Right cardiac atrium (tissue), 5 donors: ENCODE measurements at regions of chr11 and their contacts with region 1.

Region 1: DNA sequence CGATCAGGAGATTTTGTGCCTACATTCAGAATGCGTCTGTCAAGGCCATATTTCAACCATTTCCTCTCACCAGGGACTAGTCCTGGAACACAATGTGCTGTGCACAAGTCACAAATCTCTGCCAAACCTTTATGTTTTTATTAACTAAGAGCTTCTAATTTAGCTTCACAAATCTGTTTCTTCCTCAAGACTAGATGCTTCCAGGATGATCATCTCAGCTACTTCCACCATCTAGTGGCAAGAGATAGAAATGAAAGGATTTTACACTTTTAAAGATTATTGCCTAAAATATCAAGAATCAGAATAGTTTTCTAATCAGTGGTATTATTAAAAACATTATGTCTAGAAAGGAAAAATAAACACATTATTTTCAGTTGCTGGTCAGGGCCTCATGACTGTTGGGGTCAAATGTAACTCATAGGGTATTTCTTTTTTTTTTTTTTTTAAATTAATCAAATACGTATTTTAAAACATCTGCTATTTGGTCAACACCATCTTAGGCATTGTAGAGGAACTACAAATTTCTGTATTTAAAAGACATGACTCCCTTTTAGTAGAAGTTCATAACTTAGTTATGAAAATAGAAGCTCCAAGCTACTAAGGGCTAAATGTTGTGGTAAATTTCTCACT is 1102.6 kb downstream of the DLG2 start:
- DNase-seq: no peak
- ATAC-seq: peak in 1 of 2 donors; percentile 45
- H3K4me3 ChIP-seq: no peak overlapping the region
- H3K27ac ChIP-seq: no peak overlapping the region
- H3K4me1 ChIP-seq: no peaks in the 10 kb centered on the region
- H3K27me3 ChIP-seq: no peaks in the 10 kb centered on the region

Region 2: DNA sequence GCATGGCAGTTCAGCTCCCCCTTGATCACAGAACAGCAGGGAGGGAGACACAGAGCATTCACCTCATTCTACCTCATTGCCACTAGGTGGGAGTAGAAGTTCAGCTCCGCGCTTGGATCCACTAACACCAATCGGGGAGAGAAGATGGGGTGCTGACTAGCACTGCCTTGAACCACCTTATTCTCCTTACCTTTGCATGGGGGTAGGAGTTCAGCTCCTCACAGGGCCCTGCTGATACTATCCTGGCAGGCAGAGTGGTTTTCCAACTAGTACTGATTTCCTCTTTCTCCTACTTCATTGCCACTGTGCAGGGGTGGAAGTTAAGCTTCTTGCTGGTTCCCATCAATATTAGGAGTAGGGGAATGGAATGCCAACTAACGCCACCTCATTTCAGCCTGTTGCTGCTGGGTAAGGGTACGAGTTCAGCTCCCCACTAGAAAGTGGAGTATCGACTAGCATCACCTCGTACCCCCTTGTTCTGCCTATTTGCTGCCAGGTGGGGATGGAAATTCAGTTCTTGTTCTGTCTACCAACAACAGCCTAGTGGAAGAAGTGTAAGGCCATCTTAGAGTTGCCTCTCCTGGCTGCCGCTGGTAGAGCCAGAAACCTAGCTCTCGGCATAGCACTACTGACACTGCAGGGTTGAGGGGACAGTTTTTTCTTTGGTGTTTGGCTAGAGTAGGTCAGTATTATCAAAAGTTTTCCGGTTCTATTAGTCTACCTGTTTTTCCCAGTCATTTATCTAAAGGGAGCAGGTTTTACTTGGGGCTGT is 687.5 kb before region 1 on chr11:
- intact Hi-C with region 1: loop called in 2 of 4 experiments (anchors 10 kb)
- DNase-seq: peak in 1 of 3 donors; percentile 46
- ATAC-seq: peak; percentile 88 to 92
- H3K4me3 ChIP-seq: no peak overlapping the region
- H3K27ac ChIP-seq: no peak overlapping the region
- H3K4me1 ChIP-seq: no peaks in the 10 kb centered on the region
- H3K27me3 ChIP-seq: no peaks in the 10 kb centered on the region

Region 3: DNA sequence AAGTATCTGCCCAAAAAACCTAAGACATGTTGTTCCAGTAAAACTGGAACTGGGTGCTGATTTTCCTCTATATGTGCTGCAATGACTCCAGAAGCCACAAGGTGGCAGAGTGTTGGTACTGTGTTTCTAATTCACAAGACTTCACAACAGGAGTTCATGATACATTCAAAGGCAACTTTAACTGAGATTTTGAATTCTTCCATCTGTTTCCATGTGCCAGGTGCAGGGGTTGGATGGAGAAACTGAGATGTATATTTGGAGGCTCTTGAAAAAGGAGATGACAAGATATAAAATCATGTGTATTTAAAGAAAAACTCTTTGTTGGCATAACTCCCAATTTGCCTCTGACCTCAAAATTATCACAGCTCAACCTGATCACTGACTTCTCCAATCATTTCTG is 139.8 kb before region 1 on chr11:
- intact Hi-C with region 1: loop called in 2 of 4 experiments (anchors 10 kb)
- DNase-seq: peak in 2 of 3 donors; percentile 35 to 66
- ATAC-seq: no peak
- H3K4me3 ChIP-seq: no peak overlapping the region
- H3K27ac ChIP-seq: no peak overlapping the region
- H3K4me1 ChIP-seq: no peaks in the 10 kb centered on the region
- H3K27me3 ChIP-seq: no peaks in the 10 kb centered on the region

Region 4: GRCh38 chr11:84408946-84409411 is 115.6 kb before region 1 on chr11:
- intact Hi-C with region 1: loop called in 1 of 4 experiments (anchors 10 kb)
- DNase-seq: no peak
- ATAC-seq: no peak
- H3K4me3 ChIP-seq: no peak overlapping the region
- H3K27ac ChIP-seq: no peak overlapping the region
- H3K4me1 ChIP-seq: no peaks in the 10 kb centered on the region
- H3K27me3 ChIP-seq: no peaks in the 10 kb centered on the region

Region 5: GRCh38 chr11:84476581-84476980 is 48.0 kb before region 1 on chr11:
- intact Hi-C with region 1: no loop called
- DNase-seq: no peak
- ATAC-seq: no peak
- H3K4me3 ChIP-seq: no peak overlapping the region
- H3K27ac ChIP-seq: no peak overlapping the region
- H3K4me1 ChIP-seq: no peaks in the 10 kb centered on the region
- H3K27me3 ChIP-seq: no peaks in the 10 kb centered on the region